ENCODE measurements at regions of chr14 and their contacts with region 1.

Region 1: DNA sequence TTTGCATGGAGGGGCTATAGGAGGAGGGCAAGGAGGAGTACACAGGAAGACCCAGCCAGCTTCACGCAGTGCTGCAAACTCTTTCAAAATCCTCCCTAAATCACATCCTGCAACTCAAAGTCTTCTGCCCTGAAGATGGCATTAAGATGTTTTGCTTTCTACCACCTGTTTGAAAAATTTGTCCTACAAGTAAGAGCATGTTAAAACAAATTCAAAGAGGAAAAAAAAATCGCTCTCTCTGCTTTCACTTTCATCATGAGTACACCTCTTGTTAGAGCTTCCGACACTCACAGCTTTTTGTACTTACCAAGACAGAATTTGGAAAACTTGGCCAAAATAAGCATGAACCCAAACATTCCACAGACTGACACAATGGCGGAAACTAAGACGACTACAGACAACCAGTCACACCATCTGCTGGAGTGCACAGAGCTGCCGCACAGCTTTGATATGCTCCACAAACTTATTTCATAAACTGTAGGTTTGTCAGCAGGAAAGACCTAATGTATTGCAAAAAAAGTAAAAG is 21.3 kb downstream of the GCH1 start:
- DNase-seq: no peak
- H3K4me3 ChIP-seq: no peak overlapping the region
- H3K27ac ChIP-seq: no peak overlapping the region
- H3K4me1 ChIP-seq: peaks cover 0 to 6% (median 0%) of the 10 kb centered on the region in 4 experiments; a peak in 3 of 7 replicates
- H3K27me3 ChIP-seq: no peaks in the 10 kb centered on the region
- CTCF ChIP-seq: no peak
- EP300 ChIP-seq: no peak
- POLR2A ChIP-seq: no peak
- RAD21 ChIP-seq: no peak

Region 2: DNA sequence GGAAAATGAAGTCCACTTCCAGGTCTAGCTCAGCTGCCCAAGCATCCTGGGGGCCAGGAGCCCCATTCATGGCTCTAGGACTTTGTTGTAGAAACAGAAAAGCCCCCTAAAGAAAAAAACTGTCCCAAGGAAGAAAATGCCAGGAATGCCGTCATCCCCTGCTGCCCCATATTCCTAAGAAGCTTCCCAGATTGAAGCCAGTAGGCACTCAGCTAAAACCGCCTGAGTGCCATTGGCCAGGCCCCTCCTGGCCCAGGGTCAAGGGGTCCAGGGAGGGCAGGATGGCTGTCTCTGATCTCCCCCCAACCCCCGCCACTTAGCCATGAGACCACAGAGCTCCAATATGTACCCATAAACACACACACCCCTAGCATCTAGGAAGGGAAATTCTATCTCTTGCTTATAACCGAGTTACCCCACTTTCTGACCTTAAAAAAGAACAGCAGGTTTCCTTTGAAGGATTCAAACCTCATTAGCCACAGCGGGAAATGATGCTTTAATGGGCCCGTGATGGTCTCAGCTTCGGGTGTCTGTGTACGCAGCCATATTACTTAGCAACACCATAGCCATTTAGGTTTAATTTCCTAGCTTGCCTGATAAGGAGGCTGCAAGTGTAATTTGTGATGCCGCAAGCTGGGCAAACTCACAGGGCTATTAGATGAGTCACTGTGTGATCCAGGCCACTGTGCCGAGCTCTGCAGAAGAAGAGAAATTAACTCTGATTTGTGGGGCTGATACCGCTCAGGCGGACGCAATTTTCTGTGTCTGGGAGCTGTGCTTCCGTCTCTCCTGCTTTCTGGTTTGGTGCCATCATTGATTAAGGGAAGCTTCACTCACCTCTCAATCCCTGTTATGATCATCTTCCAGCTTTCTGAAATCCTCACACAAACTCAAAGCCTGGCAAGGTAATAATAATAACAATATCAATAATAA is 62.8 kb before region 1 on chr14:
- CTCF ChIA-PET with region 1: interaction called, 13 read pairs
- POLR2A ChIA-PET with region 1: interaction called, 3 read pairs
- DNase-seq: no peak
- H3K4me3 ChIP-seq: no peak overlapping the region
- H3K27ac ChIP-seq: no peak overlapping the region
- H3K4me1 ChIP-seq: no peaks in the 10 kb centered on the region
- H3K27me3 ChIP-seq: no peaks in the 10 kb centered on the region
- CTCF ChIP-seq: no peak
- EP300 ChIP-seq: no peak
- POLR2A ChIP-seq: no peak
- RAD21 ChIP-seq: no peak

Region 3: GRCh38 chr14:54893151-54893760 is 12.0 kb after region 1 on chr14:
- CTCF ChIA-PET with region 1: interaction called, 16 read pairs
- POLR2A ChIA-PET with region 1: interaction called, 6 read pairs
- DNase-seq: no peak
- H3K4me3 ChIP-seq: no peak overlapping the region
- H3K27ac ChIP-seq: no peak overlapping the region
- H3K4me1 ChIP-seq: peaks cover 0 to 4% (median 2%) of the 10 kb centered on the region in 4 experiments; a peak in 3 of 7 replicates
- H3K27me3 ChIP-seq: no peaks in the 10 kb centered on the region
- CTCF ChIP-seq: peak in 2 of 3 experiments; percentile 32 to 58; a peak in 2 of 4 replicates
- EP300 ChIP-seq: no peak
- POLR2A ChIP-seq: no peak
- RAD21 ChIP-seq: peak; percentile 39 to 51

Region 4: DNA sequence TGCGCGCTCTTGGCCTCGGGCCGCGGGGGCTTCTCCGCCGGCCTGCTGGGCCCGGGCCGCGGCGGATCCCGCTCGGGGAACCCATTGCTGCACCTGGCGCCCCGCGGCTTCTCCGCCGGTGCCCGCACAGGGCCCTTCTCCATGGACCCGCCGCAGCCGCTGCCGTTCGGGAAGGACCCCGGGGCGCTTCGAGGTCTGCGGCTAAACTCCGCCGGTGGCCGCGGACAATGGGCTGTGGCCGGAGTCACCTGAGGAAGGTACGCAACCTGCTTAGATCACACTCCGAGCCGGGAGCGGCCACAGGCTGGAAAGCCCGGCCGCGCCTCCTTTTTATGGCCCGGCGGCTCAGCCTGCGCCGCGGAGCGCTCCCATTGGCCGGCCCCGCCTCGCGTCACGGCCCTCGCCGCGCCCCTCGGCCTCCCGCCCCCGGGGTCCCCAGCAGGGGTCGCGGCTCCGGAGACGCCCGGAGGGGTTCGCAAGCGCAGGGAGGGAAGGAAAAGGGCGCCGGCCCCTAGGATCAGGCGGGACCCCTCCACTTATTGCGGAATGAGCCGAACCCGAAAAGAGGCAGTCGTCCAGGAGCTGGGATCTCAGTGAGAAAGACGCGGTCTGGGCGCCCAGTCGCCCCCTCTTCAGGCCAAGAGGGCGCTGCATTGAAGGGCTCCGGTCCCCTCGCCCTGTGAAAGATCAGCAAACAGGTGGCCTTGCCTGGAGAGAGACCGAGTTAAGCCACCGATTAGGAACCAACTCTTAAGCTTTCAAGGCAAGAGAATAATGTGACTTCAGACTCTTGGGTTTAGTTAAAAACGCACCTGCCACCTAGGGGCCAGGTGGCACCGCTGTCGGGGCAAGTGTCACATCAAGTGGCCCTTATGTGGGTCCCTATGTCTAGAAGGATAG is 21.5 kb after region 1 on chr14 and contains the start of gene GCH1:
- CTCF ChIA-PET with region 1: interaction called, 6 read pairs
- POLR2A ChIA-PET with region 1: interaction called, 13 read pairs
- DNase-seq: peak; percentile 25 to 91
- H3K4me3 ChIP-seq: peak within 1 kb of the TSS; percentile 68 to 86 (median 72)
- H3K27ac ChIP-seq: no peak within 1 kb of the TSS
- H3K4me1 ChIP-seq: peaks cover 0 to 5% (median 1%) of the 10 kb centered on the region in 4 experiments; a peak in 6 of 7 replicates
- H3K27me3 ChIP-seq: peaks cover 2 to 20% (median 17%) of the 10 kb centered on the region in 4 experiments
- CTCF ChIP-seq: peak in 2 of 3 experiments; percentile 26 to 44; a peak in 2 of 4 replicates
- EP300 ChIP-seq: no peak
- POLR2A ChIP-seq: peak; percentile 96 to 97
- RAD21 ChIP-seq: peak in 1 of 2 experiments; percentile 15; a peak in 1 of 4 replicates
- total RNA-seq, gene GCH1: 7.9 and 8.1 TPM in 2 replicates

Region 5: DNA sequence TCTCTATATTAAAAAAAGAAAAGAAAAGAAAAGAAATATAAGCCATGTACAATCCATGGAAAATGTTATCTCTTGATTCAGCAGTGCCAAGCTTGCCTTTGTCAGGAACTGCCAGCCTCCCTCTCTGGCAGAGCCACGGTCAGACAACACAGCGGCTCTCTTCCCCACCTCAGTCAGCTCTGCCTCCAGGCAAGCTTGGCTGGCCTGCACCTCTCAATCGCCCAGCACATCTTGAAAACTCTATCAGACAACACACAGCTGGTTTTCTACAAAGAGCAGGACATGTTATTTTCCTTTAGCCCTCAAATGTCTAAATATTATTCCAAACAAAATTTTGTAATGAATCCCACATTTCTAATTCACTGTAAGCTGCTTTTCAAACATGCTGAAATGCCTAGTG is 41.3 kb after region 1 on chr14:
- CTCF ChIA-PET with region 1: no interaction called
- POLR2A ChIA-PET with region 1: no interaction called
- DNase-seq: no peak
- H3K4me3 ChIP-seq: no peak overlapping the region
- H3K27ac ChIP-seq: no peak overlapping the region
- H3K4me1 ChIP-seq: no peaks in the 10 kb centered on the region
- H3K27me3 ChIP-seq: no peaks in the 10 kb centered on the region
- CTCF ChIP-seq: no peak
- EP300 ChIP-seq: no peak
- POLR2A ChIP-seq: no peak
- RAD21 ChIP-seq: no peak